HepG2 (cell line): ENCODE measurements at regions of chr1 and their contacts with region 1.

Region 1: GRCh38 chr1:3283849-3284248 is 170.6 kb upstream of the ARHGEF16 start:
- DNase-seq: peak; percentile 10
- ATAC-seq: peak; percentile 75
- H3K4me3 ChIP-seq: no peak overlapping the region
- H3K27ac ChIP-seq: no peak overlapping the region
- H3K4me1 ChIP-seq: peaks cover 34% of the 10 kb centered on the region
- H3K27me3 ChIP-seq: peaks cover 2 to 6% of the 10 kb centered on the region in 2 experiments; a peak in 2 of 5 replicates
- CTCF ChIP-seq: peak; percentile 94
- EP300 ChIP-seq: no peak
- POLR2A ChIP-seq: no peak
- RAD21 ChIP-seq: peak; percentile 93

Region 2: DNA sequence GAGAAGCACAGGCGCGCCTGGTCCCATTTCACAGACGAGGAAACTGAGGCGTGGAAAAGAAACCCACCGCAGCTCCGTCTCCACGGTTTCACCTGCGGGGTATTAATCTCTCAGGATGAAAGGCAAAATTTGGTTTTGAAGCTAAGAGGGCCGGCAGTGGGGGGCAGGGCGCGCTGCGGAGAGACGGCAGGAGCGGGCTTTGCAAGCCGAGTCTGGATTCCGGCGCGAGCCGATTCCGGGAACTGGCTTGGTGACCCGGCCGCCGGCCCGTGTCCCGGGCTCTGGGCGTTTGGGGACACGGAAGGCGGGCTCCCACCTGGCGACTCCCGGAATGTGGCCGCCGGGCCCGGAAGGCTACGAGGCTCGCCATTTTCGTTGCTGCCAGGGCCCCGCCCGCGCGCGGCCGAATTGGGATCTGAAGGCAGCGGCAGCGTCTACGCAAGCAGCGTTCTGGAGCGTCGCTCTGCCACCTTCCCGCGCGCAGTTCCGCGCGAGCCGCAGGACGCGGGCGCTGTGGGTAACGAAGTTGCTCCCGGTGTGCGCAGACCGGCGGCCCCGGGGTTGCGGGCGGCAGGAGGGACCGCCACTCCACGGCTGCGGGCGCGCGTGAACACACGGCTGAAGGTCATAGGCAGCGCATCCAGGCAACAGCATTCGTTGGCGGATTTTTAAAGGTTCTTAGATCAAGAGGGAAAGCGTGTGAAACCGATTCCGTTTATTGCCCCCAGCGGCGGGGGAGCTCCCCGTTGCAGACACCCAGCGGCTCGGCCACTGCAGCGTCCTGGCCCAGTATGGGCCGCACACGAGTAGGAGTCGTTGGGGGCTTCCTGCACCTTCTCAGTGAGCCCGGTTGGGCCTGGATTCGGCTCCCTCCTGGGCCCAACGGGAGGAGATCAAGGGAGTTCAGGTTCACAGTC is 220.2 kb before region 1 on chr1:
- CTCF ChIA-PET with region 1: interaction called, 11 read pairs
- POLR2A ChIA-PET with region 1: no interaction called
- in situ Hi-C with region 1: loop called (anchors 25 kb)
- intact Hi-C with region 1: loop called (anchors 2 kb)
- DNase-seq: no peak
- ATAC-seq: no peak
- H3K4me3 ChIP-seq: peak overlapping the region in 1 of 3 experiments; percentile 41; a peak in 1 of 6 replicates
- H3K27ac ChIP-seq: no peak overlapping the region
- H3K4me1 ChIP-seq: peaks cover 24% of the 10 kb centered on the region
- H3K27me3 ChIP-seq: peaks cover 8 to 47% of the 10 kb centered on the region in 2 experiments; a peak in 4 of 5 replicates
- CTCF ChIP-seq: no peak
- EP300 ChIP-seq: no peak
- POLR2A ChIP-seq: no peak
- RAD21 ChIP-seq: no peak

Region 3: DNA sequence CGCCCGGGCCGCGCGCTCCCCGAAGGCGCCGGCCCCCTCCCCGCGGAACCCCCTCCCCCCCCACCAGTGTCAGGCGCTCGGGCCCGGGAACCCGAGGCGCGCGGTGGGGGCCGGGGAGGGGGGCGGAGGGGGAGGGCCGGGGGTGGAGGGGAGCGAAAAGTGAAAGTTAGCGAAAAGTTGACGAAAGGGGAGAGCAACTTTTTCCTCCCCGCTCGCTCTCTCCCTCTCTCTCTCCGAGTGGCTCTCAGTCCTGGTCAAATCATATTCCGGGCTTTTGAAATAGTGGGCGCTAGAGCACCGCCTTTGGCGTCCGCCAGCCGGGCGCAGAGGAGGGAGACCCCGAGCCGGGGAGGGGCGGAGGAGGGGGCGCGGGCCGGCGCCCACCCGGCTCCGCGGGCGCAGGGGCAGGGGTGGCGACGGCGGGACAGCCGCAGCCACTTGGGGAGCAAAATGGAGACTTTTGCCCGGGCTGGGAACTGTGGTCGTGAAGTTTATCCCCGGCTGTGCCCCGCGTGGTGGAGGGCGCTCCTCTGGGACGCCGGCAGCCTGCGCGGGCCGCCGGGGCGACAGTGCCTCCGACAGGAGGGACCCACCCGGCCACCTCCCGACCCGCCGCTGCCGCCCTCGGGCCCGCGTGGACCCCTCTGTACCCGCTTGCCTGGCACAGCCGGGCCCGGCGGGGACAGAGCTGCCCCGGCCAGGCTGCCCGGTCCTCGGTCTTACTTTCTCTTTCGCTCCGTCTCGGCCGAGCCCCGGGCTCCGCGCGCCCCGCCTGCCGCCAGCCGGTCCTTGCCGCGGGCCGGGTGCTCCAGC is 214.2 kb before region 1 on chr1:
- CTCF ChIA-PET with region 1: interaction called, 11 read pairs
- POLR2A ChIA-PET with region 1: no interaction called
- in situ Hi-C with region 1: loop called (anchors 25 kb)
- intact Hi-C with region 1: loop called (anchors 2 kb)
- DNase-seq: peak; percentile 64
- ATAC-seq: peak; percentile 47
- H3K4me3 ChIP-seq: peak overlapping the region; percentile 60 to 77 (median 74)
- H3K27ac ChIP-seq: peak overlapping the region; percentile 56
- H3K4me1 ChIP-seq: peaks cover 35% of the 10 kb centered on the region
- H3K27me3 ChIP-seq: peaks cover 2 to 23% of the 10 kb centered on the region in 2 experiments
- CTCF ChIP-seq: peak; percentile 77
- EP300 ChIP-seq: no peak
- POLR2A ChIP-seq: no peak
- RAD21 ChIP-seq: peak; percentile 55